B cell (primary cell): ENCODE measurements at regions of chr12 and their contacts with region 1.

Region 1: GRCh38 chr12:8697476-8698131 is at the start of gene RIMKLB:
- DNase-seq: peak; percentile 90
- ATAC-seq: peak; percentile 85
- H3K4me3 ChIP-seq: peak within 1 kb of the TSS; percentile 51 to 99 (median 91)
- H3K4me3 Mint-ChIP-seq: peak within 1 kb of the TSS; percentile 97
- H3K27ac ChIP-seq: peak within 1 kb of the TSS; percentile 92 to 94
- H3K27ac Mint-ChIP-seq: peak within 1 kb of the TSS; percentile 98
- H3K4me1 ChIP-seq: peaks cover 24% of the 10 kb centered on the region in 2 donors
- H3K4me1 Mint-ChIP-seq: peaks cover 44% of the 10 kb centered on the region
- H3K27me3 ChIP-seq: no peaks in the 10 kb centered on the region
- H3K27me3 Mint-ChIP-seq: no peaks in the 10 kb centered on the region
- CTCF ChIP-seq: no peak
- total RNA-seq, gene RIMKLB: 54.2 and 64.1 TPM in 2 replicates

Region 2: GRCh38 chr12:7769999-7770398 is 927.6 kb before region 1 on chr12:
- CTCF ChIA-PET with region 1: no interaction called
- POLR2A ChIA-PET with region 1: no interaction called
- intact Hi-C with region 1: no loop called
- DNase-seq: no peak
- ATAC-seq: no peak
- H3K4me3 ChIP-seq: no peak overlapping the region
- H3K4me3 Mint-ChIP-seq: no peak overlapping the region
- H3K27ac ChIP-seq: no peak overlapping the region
- H3K27ac Mint-ChIP-seq: no peak overlapping the region
- H3K4me1 ChIP-seq: no peaks in the 10 kb centered on the region
- H3K4me1 Mint-ChIP-seq: no peaks in the 10 kb centered on the region
- H3K27me3 ChIP-seq: no peaks in the 10 kb centered on the region
- H3K27me3 Mint-ChIP-seq: peaks cover 7% of the 10 kb centered on the region
- CTCF ChIP-seq: no peak

Region 3: GRCh38 chr12:8662593-8662992 is 35.0 kb before region 1 on chr12 and contains the start of gene MFAP5:
- CTCF ChIA-PET with region 1: no interaction called
- POLR2A ChIA-PET with region 1: no interaction called
- intact Hi-C with region 1: no loop called
- DNase-seq: no peak
- ATAC-seq: no peak
- H3K4me3 ChIP-seq: no peak within 1 kb of the TSS
- H3K4me3 Mint-ChIP-seq: no peak within 1 kb of the TSS
- H3K27ac ChIP-seq: no peak within 1 kb of the TSS
- H3K27ac Mint-ChIP-seq: no peak within 1 kb of the TSS
- H3K4me1 ChIP-seq: peaks cover 6 to 8% of the 10 kb centered on the region in 2 donors
- H3K4me1 Mint-ChIP-seq: peaks cover 4% of the 10 kb centered on the region
- H3K27me3 ChIP-seq: no peaks in the 10 kb centered on the region
- H3K27me3 Mint-ChIP-seq: no peaks in the 10 kb centered on the region
- CTCF ChIP-seq: no peak
- total RNA-seq, gene MFAP5: 0.94 TPM in 1 of 2 replicates, not detected in the other

Region 4: DNA sequence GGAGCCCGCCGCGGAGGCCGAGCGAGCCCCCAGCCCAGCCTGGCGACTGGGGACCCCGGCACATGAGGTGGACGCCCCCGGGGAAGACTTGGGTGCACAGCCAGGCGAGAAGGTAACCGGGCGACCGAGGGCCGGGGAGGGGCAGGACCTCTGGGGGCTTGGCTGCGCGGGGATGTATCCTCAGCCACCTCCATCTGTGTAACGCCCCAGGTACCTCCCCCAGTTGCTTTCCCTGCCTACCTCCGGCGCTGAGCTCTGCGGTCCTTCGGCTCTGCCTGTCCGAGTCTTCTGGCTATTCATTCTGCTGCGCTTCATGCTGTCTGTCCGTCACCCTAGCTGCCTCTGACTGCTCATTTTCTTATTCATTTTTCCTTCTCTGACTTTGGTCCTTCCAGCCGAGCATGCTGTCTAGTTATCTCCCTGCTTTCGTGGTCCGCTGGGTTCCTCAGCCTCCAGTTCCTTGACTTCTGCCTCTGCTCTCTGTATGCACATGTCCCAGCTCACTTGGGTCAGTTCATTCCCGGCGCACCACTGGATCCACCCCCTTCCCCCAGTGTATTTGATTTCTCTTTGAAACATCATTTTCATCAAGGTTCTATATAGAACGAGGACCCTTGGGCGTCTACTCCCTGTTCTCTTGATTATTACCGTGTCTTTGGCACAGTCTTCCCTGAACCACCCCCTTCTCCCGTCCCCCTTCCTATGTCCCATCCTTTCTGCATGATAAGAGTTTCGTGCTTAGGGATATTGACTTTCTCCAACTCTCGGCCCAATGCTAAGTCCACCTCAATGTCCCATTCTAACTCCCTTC is 217.3 kb after region 1 on chr12:
- CTCF ChIA-PET with region 1: no interaction called
- POLR2A ChIA-PET with region 1: no interaction called
- intact Hi-C with region 1: loop called (anchors 1 kb)
- DNase-seq: peak; percentile 79
- ATAC-seq: peak; percentile 80
- H3K4me3 ChIP-seq: peak overlapping the region; percentile 64 to 87 (median 75)
- H3K4me3 Mint-ChIP-seq: no peak overlapping the region
- H3K27ac ChIP-seq: peak overlapping the region; percentile 31 to 47
- H3K27ac Mint-ChIP-seq: no peak overlapping the region
- H3K4me1 ChIP-seq: peaks cover 20 to 22% of the 10 kb centered on the region in 2 donors
- H3K4me1 Mint-ChIP-seq: peaks cover 26% of the 10 kb centered on the region
- H3K27me3 ChIP-seq: no peaks in the 10 kb centered on the region
- H3K27me3 Mint-ChIP-seq: no peaks in the 10 kb centered on the region
- CTCF ChIP-seq: no peak

Region 5: GRCh38 chr12:8949342-8950220 is 252.0 kb after region 1 on chr12 and contains the start of gene M6PR:
- CTCF ChIA-PET with region 1: no interaction called
- POLR2A ChIA-PET with region 1: interaction called, 4 read pairs
- intact Hi-C with region 1: loop called (anchors 1 kb)
- DNase-seq: peak; percentile 95
- ATAC-seq: peak; percentile 83
- H3K4me3 ChIP-seq: peak within 1 kb of the TSS; percentile 67 to 99 (median 91)
- H3K4me3 Mint-ChIP-seq: peak within 1 kb of the TSS; percentile 95
- H3K27ac ChIP-seq: peak within 1 kb of the TSS; percentile 97 to 98
- H3K27ac Mint-ChIP-seq: peak within 1 kb of the TSS; percentile 98
- H3K4me1 ChIP-seq: peaks cover 31 to 35% of the 10 kb centered on the region in 2 donors
- H3K4me1 Mint-ChIP-seq: peaks cover 44% of the 10 kb centered on the region
- H3K27me3 ChIP-seq: no peaks in the 10 kb centered on the region
- H3K27me3 Mint-ChIP-seq: no peaks in the 10 kb centered on the region
- CTCF ChIP-seq: peak; percentile 47
- total RNA-seq, gene M6PR: 199 and 204 TPM in 2 replicates